HepG2 (cell line): ENCODE measurements at regions of chr5 and their contacts with region 1.

Region 1: GRCh38 chr5:140734354-140734753 is 34.1 kb downstream of the ZMAT2 start:
- DNase-seq: peak; percentile 43
- ATAC-seq: peak; percentile 88
- H3K4me3 ChIP-seq: no peak overlapping the region
- H3K27ac ChIP-seq: no peak overlapping the region
- H3K4me1 ChIP-seq: no peaks in the 10 kb centered on the region
- H3K27me3 ChIP-seq: no peaks in the 10 kb centered on the region; a peak in 1 of 5 replicates
- CTCF ChIP-seq: peak; percentile 76
- EP300 ChIP-seq: no peak
- POLR2A ChIP-seq: no peak
- RAD21 ChIP-seq: peak; percentile 44; the same call in 1 of the 2 replicates

Region 2: DNA sequence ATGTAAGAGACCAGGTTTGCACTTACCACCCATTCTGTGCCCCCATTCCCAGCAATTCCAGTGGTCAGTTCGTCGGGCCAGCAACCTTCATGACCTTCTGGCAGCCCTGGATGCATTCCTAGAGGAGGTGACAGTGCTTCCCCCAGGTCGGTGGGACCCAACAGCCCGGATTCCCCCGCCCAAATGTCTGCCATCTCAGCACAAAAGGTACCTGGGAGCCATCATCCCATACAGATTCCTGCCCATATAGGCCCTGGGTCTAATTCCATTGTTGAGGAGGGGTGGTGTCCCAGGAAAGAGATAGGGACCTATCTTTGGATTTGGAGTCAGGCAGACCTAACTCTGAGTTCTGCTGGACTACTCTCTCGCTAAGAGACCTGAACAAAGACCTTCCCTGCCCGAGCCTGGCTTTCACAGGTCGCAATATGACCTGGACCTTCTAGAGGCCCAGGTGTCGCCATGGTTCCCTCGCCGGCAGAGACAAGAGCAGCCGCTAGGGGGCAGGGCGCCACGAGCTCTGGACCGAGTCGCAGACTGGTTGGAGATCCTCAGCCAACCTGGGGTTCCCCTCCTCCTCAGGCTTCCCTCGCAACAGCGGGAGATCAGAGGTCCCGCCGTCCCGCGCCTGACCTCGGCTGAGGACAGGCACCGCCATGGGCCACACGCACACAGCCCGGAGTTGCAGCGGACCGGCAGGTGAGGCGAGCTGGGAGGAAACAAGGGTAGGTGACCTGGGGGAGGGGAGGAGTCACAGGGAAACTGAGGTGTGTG is 371.3 kb before region 1 on chr5:
- CTCF ChIA-PET with region 1: no interaction called
- POLR2A ChIA-PET with region 1: no interaction called
- in situ Hi-C with region 1: loop called (anchors 10 kb)
- intact Hi-C with region 1: loop called (anchors 2 kb)
- DNase-seq: peak; percentile 74
- ATAC-seq: peak; percentile 87
- H3K4me3 ChIP-seq: peak overlapping the region; percentile 36 to 75 (median 59); a peak in 5 of 6 replicates
- H3K27ac ChIP-seq: no peak overlapping the region
- H3K4me1 ChIP-seq: peaks cover 31% of the 10 kb centered on the region
- H3K27me3 ChIP-seq: peaks cover 0 to 8% of the 10 kb centered on the region in 2 experiments; a peak in 1 of 5 replicates
- CTCF ChIP-seq: peak; percentile 98
- EP300 ChIP-seq: no peak
- POLR2A ChIP-seq: no peak
- RAD21 ChIP-seq: peak; percentile 66

Region 3: DNA sequence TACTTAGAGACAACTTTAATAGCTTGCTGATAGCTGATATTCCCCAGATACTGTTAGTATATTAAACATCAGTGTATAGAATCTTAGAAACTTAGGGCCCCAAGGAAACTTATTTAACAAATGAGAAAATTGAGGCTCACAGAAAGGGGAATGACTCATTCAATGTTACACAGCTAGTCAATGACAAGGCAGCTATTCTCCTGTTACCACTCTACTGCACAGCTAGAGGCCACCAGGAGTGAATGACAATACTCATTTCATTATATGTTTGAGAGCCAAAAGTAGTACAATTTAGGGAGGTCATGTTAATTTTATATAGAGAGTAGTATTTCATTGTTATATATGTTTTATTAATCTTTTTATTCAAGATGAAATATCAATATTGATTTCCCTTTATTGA is 283.6 kb after region 1 on chr5:
- CTCF ChIA-PET with region 1: no interaction called
- POLR2A ChIA-PET with region 1: no interaction called
- in situ Hi-C with region 1: no loop called
- intact Hi-C with region 1: no loop called
- DNase-seq: no peak
- ATAC-seq: no peak
- H3K4me3 ChIP-seq: no peak overlapping the region
- H3K27ac ChIP-seq: no peak overlapping the region
- H3K4me1 ChIP-seq: no peaks in the 10 kb centered on the region
- H3K27me3 ChIP-seq: no peaks in the 10 kb centered on the region; a peak in 1 of 5 replicates
- CTCF ChIP-seq: no peak
- EP300 ChIP-seq: no peak
- POLR2A ChIP-seq: no peak
- RAD21 ChIP-seq: no peak